Psoas muscle (tissue), 8 donors: ENCODE measurements at regions of chr16 and their contacts with region 1.

Region 1: DNA sequence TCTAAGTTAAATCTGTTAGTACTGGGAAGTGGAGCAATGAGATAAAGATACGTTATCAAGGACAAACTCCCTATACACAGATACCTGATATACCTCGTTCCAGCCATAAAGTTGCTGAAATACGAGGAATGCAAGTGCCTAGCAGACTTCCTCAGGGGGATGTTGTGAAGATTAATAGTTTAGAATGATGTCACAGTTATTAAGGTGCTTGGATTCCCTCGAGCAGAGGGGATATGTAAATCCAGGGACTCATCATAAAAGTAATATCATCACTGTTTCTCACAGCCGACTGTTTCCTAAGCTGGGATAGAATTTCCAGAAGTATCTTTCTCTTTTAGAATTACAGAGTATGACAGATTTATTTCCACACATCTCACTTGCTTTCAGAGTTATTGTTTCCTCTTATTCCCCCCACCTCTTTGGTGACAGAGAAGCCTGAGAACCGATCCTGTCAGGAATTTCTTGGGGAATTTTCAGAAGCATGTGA is 28.4 kb upstream of the ZFHX3 start:
- DNase-seq: no peak
- ATAC-seq: no peak
- H3K4me3 ChIP-seq: no peak overlapping the region
- H3K27ac ChIP-seq: no peak overlapping the region
- H3K4me1 ChIP-seq: peaks cover 3% of the 10 kb centered on the region
- H3K27me3 ChIP-seq: no peaks in the 10 kb centered on the region
- CTCF ChIP-seq: no peak

Region 2: GRCh38 chr16:73154063-73154870 is 77.9 kb after region 1 on chr16:
- intact Hi-C with region 1: no loop called
- DNase-seq: peak in 1 of 2 donors; percentile 69
- ATAC-seq: peak in 1 of 4 donors; percentile 32
- H3K4me3 ChIP-seq: no peak overlapping the region
- H3K27ac ChIP-seq: no peak overlapping the region
- H3K4me1 ChIP-seq: no peaks in the 10 kb centered on the region
- H3K27me3 ChIP-seq: no peaks in the 10 kb centered on the region
- CTCF ChIP-seq: no peak

Region 3: DNA sequence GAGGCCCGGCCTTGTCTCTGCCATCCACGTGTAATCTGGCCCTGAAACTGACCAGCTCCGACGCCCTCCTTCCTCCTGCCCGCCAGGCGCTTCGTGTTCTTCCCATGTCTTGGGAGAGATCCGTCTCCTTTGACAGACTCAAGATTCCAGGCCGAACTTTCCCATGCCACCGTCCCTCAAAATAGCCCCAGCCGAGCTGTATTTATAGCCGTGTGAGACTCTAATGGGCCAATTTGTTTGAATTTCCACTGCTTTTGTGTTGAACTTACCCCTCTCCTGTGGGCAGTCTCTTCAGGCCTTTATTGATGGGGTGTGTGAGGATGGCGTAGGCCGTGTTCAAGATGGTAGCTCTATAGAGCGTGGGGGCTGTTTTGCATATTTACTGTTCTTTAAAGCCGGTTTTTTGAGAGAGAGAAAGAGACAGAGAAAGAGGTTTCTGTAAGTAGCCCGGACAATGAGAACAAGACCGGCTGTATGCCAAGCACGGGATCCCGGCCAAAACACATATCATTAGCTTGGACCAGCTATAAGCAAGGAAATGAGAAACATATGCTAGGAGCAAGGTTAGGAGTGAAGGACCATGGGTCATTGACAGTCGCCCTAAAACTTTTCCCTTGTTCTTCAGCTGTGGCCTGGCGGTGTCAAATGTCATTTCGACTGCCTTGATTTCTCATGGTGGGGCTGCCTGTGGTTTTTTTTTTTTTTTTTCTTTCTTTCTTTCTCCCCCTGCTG is 96.0 kb after region 1 on chr16:
- intact Hi-C with region 1: loop called in 1 of 2 experiments (anchors 5 kb)
- DNase-seq: peak; percentile 73 to 76
- ATAC-seq: peak; percentile 52 to 72 (median 61)
- H3K4me3 ChIP-seq: peak overlapping the region; percentile 15
- H3K27ac ChIP-seq: peak overlapping the region; percentile 50
- H3K4me1 ChIP-seq: peaks cover 11% of the 10 kb centered on the region
- H3K27me3 ChIP-seq: no peaks in the 10 kb centered on the region
- CTCF ChIP-seq: no peak